Caco-2 (cell line): ENCODE measurements at regions of chr2 and their contacts with region 1.

Region 1: GRCh38 chr2:19855542-19856431 is 46.0 kb downstream of the TTC32 start:
- DNase-seq: no peak
- H3K4me3 ChIP-seq: no peak overlapping the region
- H3K4me3 Mint-ChIP-seq: no peak overlapping the region
- H3K27ac Mint-ChIP-seq: peak overlapping the region; percentile 5
- H3K4me1 ChIP-seq: peaks cover 10% of the 10 kb centered on the region; the same call in 1 of the 2 replicates
- H3K4me1 Mint-ChIP-seq: peaks cover 13% of the 10 kb centered on the region
- H3K27me3 ChIP-seq: no peaks in the 10 kb centered on the region
- H3K27me3 Mint-ChIP-seq: no peaks in the 10 kb centered on the region
- CTCF ChIP-seq: no peak

Region 2: GRCh38 chr2:19786408-19787058 is 69.3 kb before region 1 on chr2:
- CTCF ChIA-PET with region 1: no interaction called
- POLR2A ChIA-PET with region 1: no interaction called
- intact Hi-C with region 1: loop called (anchors 5 kb)
- DNase-seq: peak; percentile 57 to 63
- H3K4me3 ChIP-seq: no peak overlapping the region
- H3K4me3 Mint-ChIP-seq: no peak overlapping the region
- H3K27ac Mint-ChIP-seq: peak overlapping the region; percentile 63
- H3K4me1 ChIP-seq: peaks cover 21% of the 10 kb centered on the region
- H3K4me1 Mint-ChIP-seq: peaks cover 20% of the 10 kb centered on the region
- H3K27me3 ChIP-seq: no peaks in the 10 kb centered on the region
- H3K27me3 Mint-ChIP-seq: peaks cover under 1% of the 10 kb centered on the region
- CTCF ChIP-seq: no peak

Region 3: GRCh38 chr2:20001361-20001863 is 145.6 kb after region 1 on chr2:
- CTCF ChIA-PET with region 1: no interaction called
- POLR2A ChIA-PET with region 1: no interaction called
- intact Hi-C with region 1: no loop called
- DNase-seq: no peak
- H3K4me3 ChIP-seq: no peak overlapping the region
- H3K4me3 Mint-ChIP-seq: no peak overlapping the region
- H3K27ac Mint-ChIP-seq: no peak overlapping the region
- H3K4me1 ChIP-seq: no peaks in the 10 kb centered on the region
- H3K4me1 Mint-ChIP-seq: no peaks in the 10 kb centered on the region
- H3K27me3 ChIP-seq: no peaks in the 10 kb centered on the region
- H3K27me3 Mint-ChIP-seq: no peaks in the 10 kb centered on the region
- CTCF ChIP-seq: no peak